ENCODE measurements at regions of chr12 and their contacts with region 1.

Region 1: GRCh38 chr12:95532851-95533250 is 18.4 kb downstream of the USP44 start:
- DNase-seq: no peak
- H3K4me3 ChIP-seq: no peak overlapping the region
- H3K27ac ChIP-seq: no peak overlapping the region
- H3K4me1 ChIP-seq: no peaks in the 10 kb centered on the region
- H3K27me3 ChIP-seq: no peaks in the 10 kb centered on the region
- CTCF ChIP-seq: no peak

Region 2: GRCh38 chr12:95336390-95337067 is 196.3 kb before region 1 on chr12:
- intact Hi-C with region 1: loop called (anchors 5 kb)
- DNase-seq: peak in 1 of 2 donors; percentile 82
- H3K4me3 ChIP-seq: peak overlapping the region in 1 of 2 donors; percentile 5
- H3K27ac ChIP-seq: peak overlapping the region; percentile 59 to 78
- H3K4me1 ChIP-seq: peaks cover 0 to 5% of the 10 kb centered on the region in 2 donors
- H3K27me3 ChIP-seq: no peaks in the 10 kb centered on the region
- CTCF ChIP-seq: peak; percentile 78 to 97 (median 85)

Region 3: GRCh38 chr12:95351748-95352147 is 181.1 kb before region 1 on chr12:
- intact Hi-C with region 1: loop called (anchors 5 kb)
- DNase-seq: no peak
- H3K4me3 ChIP-seq: no peak overlapping the region
- H3K27ac ChIP-seq: no peak overlapping the region
- H3K4me1 ChIP-seq: no peaks in the 10 kb centered on the region
- H3K27me3 ChIP-seq: no peaks in the 10 kb centered on the region
- CTCF ChIP-seq: peak in 1 of 3 experiments; percentile 20

Region 4: GRCh38 chr12:95428472-95428871 is 104.4 kb before region 1 on chr12:
- intact Hi-C with region 1: no loop called
- DNase-seq: no peak
- H3K4me3 ChIP-seq: no peak overlapping the region
- H3K27ac ChIP-seq: no peak overlapping the region
- H3K4me1 ChIP-seq: no peaks in the 10 kb centered on the region
- H3K27me3 ChIP-seq: no peaks in the 10 kb centered on the region
- CTCF ChIP-seq: no peak